AG04449 (cell line): ENCODE measurements at regions of chr22 and their contacts with region 1.

Region 1: GRCh38 chr22:36510966-36511881 is 4.4 kb upstream of the FOXRED2 start:
- DNase-seq: no peak
- H3K4me3 ChIP-seq: no peak overlapping the region
- CTCF ChIP-seq: peak; percentile 68

Region 2: GRCh38 chr22:36339171-36340065 is 171.8 kb before region 1 on chr22:
- CTCF ChIA-PET with region 1: no interaction called
- POLR2A ChIA-PET with region 1: no interaction called
- DNase-seq: peak; percentile 62
- H3K4me3 ChIP-seq: no peak overlapping the region
- CTCF ChIP-seq: no peak

Region 3: GRCh38 chr22:36528795-36529751 is 17.8 kb after region 1 on chr22 and contains the start of gene EIF3D:
- CTCF ChIA-PET with region 1: interaction called, 13 read pairs
- POLR2A ChIA-PET with region 1: interaction called, 6 read pairs
- DNase-seq: peak; percentile 97
- H3K4me3 ChIP-seq: peak within 1 kb of the TSS; percentile 90
- CTCF ChIP-seq: peak; percentile 7

Region 4: DNA sequence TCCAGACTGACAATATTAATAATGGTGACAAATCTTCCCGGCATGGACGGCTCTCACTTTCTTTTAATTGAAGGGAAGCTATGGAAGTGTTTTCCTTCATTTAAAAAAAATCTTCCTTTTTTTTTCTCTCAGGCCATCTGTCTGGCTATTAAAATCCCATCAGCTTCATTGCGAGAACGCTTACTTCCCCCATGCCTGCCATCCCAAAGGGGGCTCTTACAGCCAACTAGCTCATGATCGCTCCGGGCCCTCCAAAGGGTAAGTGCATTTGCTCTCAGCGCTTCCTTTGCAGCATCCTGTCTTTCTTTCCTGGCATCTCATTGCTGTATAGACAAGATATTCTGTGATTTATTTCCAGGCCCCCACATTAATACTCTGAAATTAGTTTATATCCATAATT is 171.6 kb after region 1 on chr22:
- CTCF ChIA-PET with region 1: no interaction called
- POLR2A ChIA-PET with region 1: no interaction called
- DNase-seq: no peak
- H3K4me3 ChIP-seq: no peak overlapping the region
- CTCF ChIP-seq: no peak